ENCODE measurements at regions of chr3 and their contacts with region 1.

Region 1: GRCh38 chr3:42438193-42438592 is 27.8 kb upstream of the LYZL4 start:
- DNase-seq: no peak
- H3K4me3 Mint-ChIP-seq: no peak overlapping the region
- H3K27ac Mint-ChIP-seq: no peak overlapping the region
- H3K4me1 Mint-ChIP-seq: no peaks in the 10 kb centered on the region
- H3K27me3 Mint-ChIP-seq: peaks cover 33% of the 10 kb centered on the region
- CTCF ChIP-seq: no peak

Region 2: GRCh38 chr3:42652611-42653302 is 214.6 kb after region 1 on chr3:
- CTCF ChIA-PET with region 1: no interaction called
- intact Hi-C with region 1: no loop called
- DNase-seq: peak; percentile 73
- H3K4me3 Mint-ChIP-seq: peak overlapping the region; percentile 71
- H3K27ac Mint-ChIP-seq: peak overlapping the region; percentile 60
- H3K4me1 Mint-ChIP-seq: peaks cover 20% of the 10 kb centered on the region
- H3K27me3 Mint-ChIP-seq: no peaks in the 10 kb centered on the region
- CTCF ChIP-seq: no peak

Region 3: GRCh38 chr3:43036621-43037423 is 598.6 kb after region 1 on chr3:
- CTCF ChIA-PET with region 1: no interaction called
- intact Hi-C with region 1: no loop called
- DNase-seq: no peak
- H3K4me3 Mint-ChIP-seq: no peak overlapping the region
- H3K27ac Mint-ChIP-seq: no peak overlapping the region
- H3K4me1 Mint-ChIP-seq: no peaks in the 10 kb centered on the region
- H3K27me3 Mint-ChIP-seq: peaks cover 29% of the 10 kb centered on the region
- CTCF ChIP-seq: no peak

Region 4: GRCh38 chr3:43105596-43106292 is 667.6 kb after region 1 on chr3 and contains the start of gene POMGNT2:
- CTCF ChIA-PET with region 1: interaction called, 12 read pairs
- intact Hi-C with region 1: no loop called
- DNase-seq: peak; percentile 93
- H3K4me3 Mint-ChIP-seq: peak within 1 kb of the TSS; percentile 77
- H3K27ac Mint-ChIP-seq: no peak within 1 kb of the TSS
- H3K4me1 Mint-ChIP-seq: peaks cover 7% of the 10 kb centered on the region
- H3K27me3 Mint-ChIP-seq: no peaks in the 10 kb centered on the region
- CTCF ChIP-seq: no peak
- total RNA-seq, gene POMGNT2: 14.3 and 15.5 TPM in 2 replicates